ENCODE measurements at regions of chr4 and their contacts with region 1.

Region 1: GRCh38 chr4:174069848-174070330 is 213.6 kb downstream of the FBXO8 start:
- DNase-seq: no peak

Region 2: DNA sequence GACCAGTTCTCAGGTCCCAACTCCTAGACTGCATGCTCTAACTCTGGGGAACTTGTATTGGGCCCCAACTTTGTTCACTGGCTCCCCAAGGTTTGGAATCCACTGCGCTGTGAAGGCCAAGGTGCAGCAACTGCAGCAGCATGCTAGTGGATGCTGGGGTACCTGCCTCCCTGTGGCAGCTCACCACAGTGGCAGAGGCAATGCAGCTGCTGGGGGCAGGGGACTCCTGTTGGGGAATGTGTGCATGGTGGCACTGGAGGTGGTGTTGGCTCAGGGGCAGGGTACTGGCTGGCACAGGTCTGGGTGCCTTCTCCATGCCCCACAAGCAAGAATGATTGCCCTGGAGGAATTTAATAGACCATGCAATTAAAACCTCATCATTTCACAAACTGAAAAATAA is 1394.7 kb before region 1 on chr4:
- intact Hi-C with region 1: loop called in 1 of 2 experiments (anchors 10 kb)
- DNase-seq: no peak

Region 3: GRCh38 chr4:173943547-173943946 is 126.3 kb before region 1 on chr4:
- intact Hi-C with region 1: no loop called
- DNase-seq: no peak

Region 4: GRCh38 chr4:174047363-174047762 is 22.5 kb before region 1 on chr4:
- intact Hi-C with region 1: no loop called
- DNase-seq: no peak

Measured in posterior vena cava (tissue), 2 donors.